Heart left ventricle (tissue), 16 donors: ENCODE measurements at regions of chr4 and their contacts with region 1.

Region 1: DNA sequence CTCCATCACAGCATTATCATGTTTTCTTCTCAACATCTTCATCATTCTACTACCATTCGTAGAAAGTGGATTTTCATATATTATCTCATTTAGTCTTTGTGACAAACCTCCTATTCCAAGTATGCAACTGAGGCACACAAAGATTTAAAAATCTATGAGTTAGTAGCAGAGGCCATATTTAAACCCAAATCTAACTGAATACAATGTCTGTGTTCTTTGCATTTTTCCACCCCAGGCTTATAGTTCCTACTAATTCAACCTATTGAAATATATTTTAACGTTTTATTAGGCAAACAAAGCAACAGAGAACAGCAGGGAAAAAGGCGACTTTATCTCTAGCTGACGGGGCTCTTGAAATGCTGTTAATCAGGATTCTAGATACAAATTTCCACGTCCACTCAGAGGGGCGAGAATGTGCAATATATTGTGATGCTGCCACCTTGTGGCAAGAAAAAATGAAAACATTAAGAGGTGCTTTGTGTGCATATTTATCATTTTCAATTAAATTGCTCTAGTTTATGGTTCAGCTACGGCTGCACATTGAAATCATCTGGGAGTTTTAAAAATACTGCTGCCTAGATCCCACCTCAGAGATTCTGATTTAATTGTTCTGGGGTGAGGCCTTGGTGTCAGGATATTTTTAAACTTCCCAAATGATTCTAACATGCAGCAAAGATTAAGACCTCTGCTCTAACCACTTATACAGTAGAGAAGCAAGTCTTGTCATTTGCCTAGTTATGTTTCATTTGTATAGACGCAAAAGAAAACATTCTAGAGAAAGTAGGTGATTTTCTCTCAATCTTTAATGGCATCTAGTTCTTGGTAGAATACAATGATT is 315.9 kb downstream of the MAPK10 start:
- DNase-seq: peak in 3 of 5 donors; percentile 15 to 24 (median 18)
- ATAC-seq: peak in 2 of 4 donors; percentile 46 to 47
- H3K4me3 ChIP-seq: no peak overlapping the region
- H3K27ac ChIP-seq: no peak overlapping the region
- H3K4me1 ChIP-seq: peaks cover 0 to 9% (median 0%) of the 10 kb centered on the region in 12 donors
- H3K27me3 ChIP-seq: no peaks in the 10 kb centered on the region
- CTCF ChIP-seq: peak; percentile 58 to 77 (median 74)
- POLR2A ChIP-seq: no peak

Region 2: GRCh38 chr4:85147439-85148076 is 896.4 kb before region 1 on chr4:
- intact Hi-C with region 1: loop called in 8 of 10 experiments (anchors 2 to 10 kb)
- DNase-seq: peak; percentile 49 to 72 (median 58)
- ATAC-seq: peak; percentile 59 to 77 (median 76)
- H3K4me3 ChIP-seq: peak overlapping the region in 8 of 12 donors; percentile 10 to 45 (median 34)
- H3K27ac ChIP-seq: peak overlapping the region in 3 of 12 donors; percentile 4 to 36 (median 23)
- H3K4me1 ChIP-seq: peaks cover 0 to 21% (median 4%) of the 10 kb centered on the region in 12 donors
- H3K27me3 ChIP-seq: no peaks in the 10 kb centered on the region
- CTCF ChIP-seq: peak; percentile 50 to 80 (median 72)
- POLR2A ChIP-seq: no peak

Region 3: GRCh38 chr4:85761803-85762528 is 282.0 kb before region 1 on chr4:
- intact Hi-C with region 1: loop called in 8 of 10 experiments (anchors 2 to 10 kb)
- DNase-seq: peak in 4 of 5 donors; percentile 33 to 66 (median 47)
- ATAC-seq: peak; percentile 44 to 70 (median 58)
- H3K4me3 ChIP-seq: peak overlapping the region in 1 of 12 donors; percentile 3
- H3K27ac ChIP-seq: peak overlapping the region in 11 of 12 donors; percentile 22 to 61 (median 36)
- H3K4me1 ChIP-seq: peaks cover 0 to 38% (median 20%) of the 10 kb centered on the region in 12 donors
- H3K27me3 ChIP-seq: no peaks in the 10 kb centered on the region
- CTCF ChIP-seq: no peak
- POLR2A ChIP-seq: no peak

Region 4: GRCh38 chr4:85798012-85798770 is 245.8 kb before region 1 on chr4:
- intact Hi-C with region 1: loop called in 6 of 10 experiments (anchors 2 to 10 kb)
- DNase-seq: no peak
- ATAC-seq: no peak
- H3K4me3 ChIP-seq: no peak overlapping the region
- H3K27ac ChIP-seq: peak overlapping the region in 3 of 12 donors; percentile 11 to 21 (median 18)
- H3K4me1 ChIP-seq: peaks cover 0 to 26% (median 10%) of the 10 kb centered on the region in 12 donors
- H3K27me3 ChIP-seq: no peaks in the 10 kb centered on the region
- CTCF ChIP-seq: no peak
- POLR2A ChIP-seq: no peak